ENCODE measurements at regions of chr1 and their contacts with region 1.

Region 1: DNA sequence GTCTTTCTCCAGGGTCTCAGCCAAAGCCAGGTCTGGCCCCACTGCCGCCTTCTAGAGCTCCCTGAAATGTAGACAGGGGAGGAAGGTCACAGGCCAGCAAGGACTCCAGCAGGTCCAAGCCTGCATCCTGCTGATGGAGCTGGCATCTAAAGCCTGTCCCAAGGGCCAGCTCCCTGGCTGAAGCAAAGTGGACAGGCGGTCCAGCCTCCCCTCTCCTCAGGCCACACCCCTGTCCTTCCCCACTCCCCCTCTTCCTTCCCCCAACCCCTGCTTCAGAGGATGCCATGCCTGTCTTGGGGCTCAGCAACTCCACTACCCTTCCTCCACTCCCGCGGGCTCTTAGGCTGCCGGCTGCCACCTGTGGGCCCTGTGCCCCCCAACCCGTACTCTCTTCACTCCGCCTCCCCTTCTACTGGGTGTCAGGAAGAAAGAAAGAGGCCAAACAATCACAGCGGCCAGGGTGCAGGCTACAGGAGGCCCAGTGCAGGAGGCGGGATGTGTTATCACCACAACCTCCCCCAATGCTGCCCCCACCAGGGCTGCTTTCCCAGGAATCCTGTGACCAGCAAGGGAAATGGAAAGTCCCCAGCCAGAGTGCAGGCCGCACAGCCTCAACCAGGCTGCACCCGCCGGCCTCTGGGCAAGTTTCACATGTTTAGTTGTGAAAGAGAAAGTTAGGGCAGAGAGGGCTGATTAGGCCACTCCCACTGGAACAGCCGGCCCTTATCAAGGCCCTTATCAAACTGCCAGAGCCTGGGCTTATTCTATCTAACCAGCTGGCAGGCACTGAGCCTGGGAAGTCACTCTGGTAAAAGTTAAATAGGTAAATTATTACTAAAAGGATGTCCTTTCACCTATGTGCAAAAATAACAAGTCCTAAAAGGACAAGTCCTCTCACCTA is 34.1 kb downstream of the ACOT7 start:
- DNase-seq: peak; percentile 93
- ATAC-seq: peak; percentile 86
- H3K4me3 ChIP-seq: peak overlapping the region; percentile 46 to 66 (median 61)
- H3K27ac ChIP-seq: peak overlapping the region; percentile 72
- H3K4me1 ChIP-seq: peaks cover 73% of the 10 kb centered on the region
- H3K27me3 ChIP-seq: no peaks in the 10 kb centered on the region
- CTCF ChIP-seq: peak; percentile 72
- EP300 ChIP-seq: peak in 1 of 2 experiments; percentile 68; a peak in 1 of 4 replicates
- POLR2A ChIP-seq: 0 out of 4 replicates have a peak, but pooled peaks of 1 of the 2 experiments have one; percentile 43
- RAD21 ChIP-seq: no peak

Region 2: GRCh38 chr1:5239911-5240310 is 1119.6 kb before region 1 on chr1:
- CTCF ChIA-PET with region 1: no interaction called
- POLR2A ChIA-PET with region 1: no interaction called
- in situ Hi-C with region 1: no loop called
- intact Hi-C with region 1: loop called (anchors 10 kb)
- DNase-seq: no peak
- ATAC-seq: no peak
- H3K4me3 ChIP-seq: no peak overlapping the region
- H3K27ac ChIP-seq: no peak overlapping the region
- H3K4me1 ChIP-seq: no peaks in the 10 kb centered on the region
- H3K27me3 ChIP-seq: peaks cover 0 to 4% of the 10 kb centered on the region in 2 experiments; a peak in 1 of 5 replicates
- CTCF ChIP-seq: no peak
- EP300 ChIP-seq: no peak
- POLR2A ChIP-seq: no peak
- RAD21 ChIP-seq: no peak

Region 3: GRCh38 chr1:6393400-6394187 is 34.1 kb after region 1 on chr1 and contains the start of gene ACOT7:
- CTCF ChIA-PET with region 1: no interaction called
- POLR2A ChIA-PET with region 1: interaction called, 24 read pairs
- in situ Hi-C with region 1: no loop called
- intact Hi-C with region 1: loop called (anchors 5 kb)
- DNase-seq: peak; percentile 79
- ATAC-seq: peak; percentile 93
- H3K4me3 ChIP-seq: peak within 1 kb of the TSS; percentile 66 to 76 (median 70)
- H3K27ac ChIP-seq: peak within 1 kb of the TSS; percentile 97
- H3K4me1 ChIP-seq: peaks cover 46% of the 10 kb centered on the region
- H3K27me3 ChIP-seq: no peaks in the 10 kb centered on the region
- CTCF ChIP-seq: peak; percentile 15; the same call in 1 of the 2 replicates
- EP300 ChIP-seq: no peak
- POLR2A ChIP-seq: peak; percentile 65 to 66; a peak in 3 of 4 replicates
- RAD21 ChIP-seq: peak; percentile 37; the same call in 1 of the 2 replicates
- total RNA-seq, gene ACOT7: 33.0 and 43.2 TPM in 2 replicates

Region 4: GRCh38 chr1:6401673-6402072 is 42.2 kb after region 1 on chr1:
- CTCF ChIA-PET with region 1: interaction called, 14 read pairs
- POLR2A ChIA-PET with region 1: no interaction called
- in situ Hi-C with region 1: loop called (anchors 5 kb)
- intact Hi-C with region 1: loop called (anchors 2 kb)
- DNase-seq: no peak
- ATAC-seq: no peak
- H3K4me3 ChIP-seq: no peak overlapping the region
- H3K27ac ChIP-seq: no peak overlapping the region
- H3K4me1 ChIP-seq: peaks cover 15% of the 10 kb centered on the region
- H3K27me3 ChIP-seq: peaks cover 0 to 10% of the 10 kb centered on the region in 2 experiments; a peak in 2 of 5 replicates
- CTCF ChIP-seq: no peak
- EP300 ChIP-seq: no peak
- POLR2A ChIP-seq: no peak
- RAD21 ChIP-seq: no peak